Natural killer cell (primary cell): ENCODE measurements at regions of chr9 and their contacts with region 1.

Region 1: GRCh38 chr9:100352727-100353505 is at the start of gene TEX10:
- DNase-seq: peak; percentile 85 to 93
- ATAC-seq: peak; percentile 92 to 95 (median 94)
- H3K4me3 ChIP-seq: peak within 1 kb of the TSS; percentile 68
- H3K4me3 Mint-ChIP-seq: peak within 1 kb of the TSS; percentile 95
- H3K27ac ChIP-seq: peak within 1 kb of the TSS; percentile 76
- H3K27ac Mint-ChIP-seq: peak within 1 kb of the TSS; percentile 24 to 94
- H3K4me1 ChIP-seq: peaks cover 5% of the 10 kb centered on the region
- H3K4me1 Mint-ChIP-seq: peaks cover 41 to 47% of the 10 kb centered on the region in 2 donors
- H3K27me3 ChIP-seq: no peaks in the 10 kb centered on the region
- H3K27me3 Mint-ChIP-seq: no peaks in the 10 kb centered on the region
- CTCF ChIP-seq: no peak
- total RNA-seq, gene TEX10: 11.1 to 15.9 (median 13.2) TPM

Region 2: GRCh38 chr9:100084734-100085133 is 268.2 kb before region 1 on chr9:
- intact Hi-C with region 1: loop called (anchors 10 kb)
- DNase-seq: peak in 1 of 2 donors; percentile 54
- ATAC-seq: peak; percentile 74 to 77 (median 76)
- H3K4me3 ChIP-seq: no peak overlapping the region
- H3K4me3 Mint-ChIP-seq: peak overlapping the region; percentile 32
- H3K27ac ChIP-seq: peak overlapping the region; percentile 60
- H3K27ac Mint-ChIP-seq: peak overlapping the region; percentile 30 to 79
- H3K4me1 ChIP-seq: peaks cover 3% of the 10 kb centered on the region
- H3K4me1 Mint-ChIP-seq: peaks cover 72% of the 10 kb centered on the region in 2 donors
- H3K27me3 ChIP-seq: no peaks in the 10 kb centered on the region
- H3K27me3 Mint-ChIP-seq: no peaks in the 10 kb centered on the region
- CTCF ChIP-seq: no peak

Region 3: DNA sequence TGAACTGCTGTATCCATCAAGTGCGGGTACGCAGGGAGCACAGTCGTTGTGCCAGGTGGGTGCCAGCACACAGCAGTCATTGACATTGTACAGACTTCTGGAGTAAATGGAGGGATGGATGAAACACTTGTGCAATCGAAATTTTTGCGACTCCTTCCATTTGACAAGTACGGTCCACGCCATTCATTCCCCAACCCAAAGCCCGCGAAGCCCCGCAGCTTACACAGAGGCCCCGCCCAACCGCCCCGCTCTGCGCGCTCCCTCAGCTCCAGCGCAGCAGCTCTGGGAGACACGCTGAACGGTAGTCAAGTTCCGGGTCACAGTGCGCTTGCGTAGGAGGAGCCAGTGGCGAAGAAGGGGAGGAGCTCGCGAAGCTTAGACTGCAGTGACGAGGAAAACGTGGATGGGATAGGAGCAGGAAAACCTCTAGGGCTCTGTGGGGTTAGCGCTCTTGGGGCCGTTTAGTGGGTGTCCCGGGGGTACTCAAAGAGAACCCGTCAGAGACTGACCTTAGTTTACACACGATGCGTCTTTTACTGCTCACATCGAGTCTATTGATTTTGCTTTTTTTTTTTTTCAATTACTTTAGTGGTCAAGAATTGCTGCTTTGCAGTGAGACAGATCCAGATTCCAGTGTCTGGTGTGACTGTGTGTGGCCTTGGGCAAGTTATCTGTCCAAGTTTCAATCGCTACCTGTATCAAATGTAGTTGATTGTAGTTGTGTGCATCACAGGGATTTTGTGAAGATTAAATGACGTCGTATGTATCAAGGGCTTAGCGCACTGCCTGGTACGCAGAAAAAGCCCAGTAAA is 58.8 kb after region 1 on chr9:
- intact Hi-C with region 1: loop called (anchors 1 kb)
- DNase-seq: peak; percentile 73 to 94
- ATAC-seq: peak; percentile 97 to 100 (median 100)
- H3K4me3 ChIP-seq: peak overlapping the region; percentile 62
- H3K4me3 Mint-ChIP-seq: peak overlapping the region; percentile 88
- H3K27ac ChIP-seq: no peak overlapping the region
- H3K27ac Mint-ChIP-seq: peak overlapping the region in 1 of 2 donors; percentile 68
- H3K4me1 ChIP-seq: peaks cover 12% of the 10 kb centered on the region
- H3K4me1 Mint-ChIP-seq: peaks cover 11% of the 10 kb centered on the region in 2 donors
- H3K27me3 ChIP-seq: peaks cover 3% of the 10 kb centered on the region
- H3K27me3 Mint-ChIP-seq: peaks cover 23 to 29% of the 10 kb centered on the region in 2 donors
- CTCF ChIP-seq: no peak

Region 4: DNA sequence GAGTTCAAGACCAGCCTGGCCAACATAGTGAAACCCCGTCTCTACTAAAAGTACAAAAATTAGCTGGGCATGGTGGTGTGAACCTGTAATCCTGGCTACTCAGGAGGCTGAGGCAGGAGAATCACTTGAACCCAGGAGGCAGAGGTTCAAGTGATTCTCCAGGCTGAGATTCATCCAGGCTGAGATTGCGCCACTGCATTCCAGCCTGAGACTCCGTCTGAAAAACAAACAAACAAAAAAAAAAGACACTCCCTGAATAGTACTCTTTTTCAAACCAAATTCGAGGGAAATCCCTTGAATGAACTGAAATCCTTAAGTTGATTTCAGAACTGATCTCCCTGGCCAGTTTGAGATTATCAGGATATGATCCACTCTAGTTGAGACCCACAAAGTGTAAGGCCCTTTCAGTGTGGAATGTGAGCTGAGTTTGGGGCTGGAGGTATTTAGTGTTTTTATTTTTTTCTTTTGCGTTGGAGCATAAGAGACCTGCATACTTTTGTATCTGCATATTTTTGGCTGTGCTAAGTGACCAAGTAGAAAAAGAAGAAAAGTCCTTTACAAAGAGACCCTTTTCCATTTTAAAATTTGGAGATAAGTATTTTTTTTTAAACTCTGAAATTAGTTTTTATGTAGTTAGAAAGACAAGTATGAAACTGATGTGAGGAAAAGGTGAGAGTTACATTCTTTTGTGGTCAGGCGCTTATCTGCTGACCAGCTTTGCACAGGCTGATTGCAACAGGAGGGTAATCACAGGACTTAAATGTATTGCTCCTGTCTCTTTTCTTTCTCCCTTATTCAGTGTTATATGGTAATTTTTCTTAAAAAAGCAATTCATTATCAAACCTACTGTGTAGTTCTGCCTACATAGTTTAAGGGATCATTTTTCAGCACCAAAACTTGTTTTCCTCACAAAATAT is 162.9 kb after region 1 on chr9:
- intact Hi-C with region 1: no loop called
- DNase-seq: no peak
- ATAC-seq: no peak
- H3K4me3 ChIP-seq: no peak overlapping the region
- H3K4me3 Mint-ChIP-seq: no peak overlapping the region
- H3K27ac ChIP-seq: no peak overlapping the region
- H3K27ac Mint-ChIP-seq: no peak overlapping the region
- H3K4me1 ChIP-seq: no peaks in the 10 kb centered on the region
- H3K4me1 Mint-ChIP-seq: no peaks in the 10 kb centered on the region
- H3K27me3 ChIP-seq: no peaks in the 10 kb centered on the region
- H3K27me3 Mint-ChIP-seq: no peaks in the 10 kb centered on the region
- CTCF ChIP-seq: no peak

Region 5: DNA sequence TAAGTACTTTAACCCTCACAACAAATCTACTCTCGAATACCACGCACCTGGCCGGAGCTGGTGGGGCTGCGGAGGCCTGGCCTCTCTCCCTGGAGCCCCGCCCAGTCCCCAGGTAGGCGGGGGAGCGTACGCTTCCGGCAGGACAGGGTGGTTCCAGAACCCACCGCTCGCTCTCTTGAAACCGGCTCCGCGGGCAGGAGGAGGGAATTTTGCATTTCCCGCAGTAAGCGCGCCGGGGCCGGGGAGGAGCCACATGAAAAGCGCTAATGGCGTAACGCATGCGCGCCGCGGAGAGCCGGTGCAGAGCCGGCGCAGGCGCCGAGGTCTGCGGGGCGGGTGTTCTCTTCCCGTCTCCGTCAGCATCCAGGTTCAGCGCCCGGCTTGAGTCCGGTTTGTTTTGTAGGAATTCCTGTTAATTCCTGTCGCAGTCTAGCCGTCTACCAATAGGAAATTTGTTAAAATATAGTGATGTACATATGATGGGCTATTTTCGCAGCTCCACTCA is 245.8 kb after region 1 on chr9:
- intact Hi-C with region 1: loop called (anchors 10 kb)
- DNase-seq: peak; percentile 67 to 91
- ATAC-seq: peak; percentile 83 to 92 (median 88)
- H3K4me3 ChIP-seq: peak overlapping the region; percentile 46
- H3K4me3 Mint-ChIP-seq: peak overlapping the region; percentile 89
- H3K27ac ChIP-seq: peak overlapping the region; percentile 6
- H3K27ac Mint-ChIP-seq: peak overlapping the region; percentile 1 to 19
- H3K4me1 ChIP-seq: peaks cover 7% of the 10 kb centered on the region
- H3K4me1 Mint-ChIP-seq: peaks cover 23 to 25% of the 10 kb centered on the region in 2 donors
- H3K27me3 ChIP-seq: peaks cover 2% of the 10 kb centered on the region
- H3K27me3 Mint-ChIP-seq: peaks cover 0 to 2% of the 10 kb centered on the region in 2 donors
- CTCF ChIP-seq: no peak